ENCODE measurements at regions of chr20 and their contacts with region 1.

Region 1: GRCh38 chr20:18719445-18719844 is 94.1 kb upstream of the SCP2D1 start:
- DNase-seq: no peak
- ATAC-seq: no peak
- H3K4me3 ChIP-seq: no peak overlapping the region
- H3K27ac ChIP-seq: no peak overlapping the region
- H3K4me1 ChIP-seq: peaks cover 0 to 5% (median 0%) of the 10 kb centered on the region in 12 donors
- H3K27me3 ChIP-seq: no peaks in the 10 kb centered on the region
- CTCF ChIP-seq: no peak
- POLR2A ChIP-seq: no peak

Region 2: GRCh38 chr20:18657575-18657974 is 61.9 kb before region 1 on chr20:
- intact Hi-C with region 1: loop called in 1 of 10 experiments (anchors 10 kb)
- DNase-seq: no peak
- ATAC-seq: peak in 2 of 4 donors; percentile 33 to 63
- H3K4me3 ChIP-seq: no peak overlapping the region
- H3K27ac ChIP-seq: no peak overlapping the region
- H3K4me1 ChIP-seq: peaks cover 0 to 5% (median 0%) of the 10 kb centered on the region in 12 donors
- H3K27me3 ChIP-seq: no peaks in the 10 kb centered on the region
- CTCF ChIP-seq: no peak
- POLR2A ChIP-seq: no peak

Region 3: DNA sequence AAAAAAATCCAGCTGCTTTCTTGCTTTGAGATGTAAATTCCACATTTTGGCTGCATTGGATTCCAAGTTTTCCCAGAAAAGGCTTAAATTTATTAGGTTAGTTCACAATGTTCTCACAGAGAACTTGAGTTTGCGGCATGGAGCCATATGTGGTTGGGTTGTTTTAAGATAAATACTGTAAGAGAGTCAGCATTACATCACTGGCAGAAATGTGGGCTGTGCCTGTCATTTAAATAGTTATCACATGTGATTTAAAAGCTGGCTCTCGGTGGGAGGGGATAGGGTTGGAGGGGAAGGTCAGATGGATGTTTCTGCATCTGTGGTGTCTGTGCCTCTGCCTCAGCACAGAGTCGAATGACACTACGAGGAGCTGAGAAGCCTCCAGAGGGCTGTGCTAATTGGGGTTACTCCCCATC is 20.3 kb after region 1 on chr20:
- intact Hi-C with region 1: no loop called
- DNase-seq: no peak
- ATAC-seq: peak in 3 of 4 donors; percentile 62 to 79 (median 67)
- H3K4me3 ChIP-seq: no peak overlapping the region
- H3K27ac ChIP-seq: peak overlapping the region in 2 of 12 donors; percentile 22 to 54
- H3K4me1 ChIP-seq: peaks cover 0 to 22% (median 2%) of the 10 kb centered on the region in 12 donors
- H3K27me3 ChIP-seq: no peaks in the 10 kb centered on the region
- CTCF ChIP-seq: no peak
- POLR2A ChIP-seq: no peak

Region 4: GRCh38 chr20:18773566-18773965 is 54.1 kb after region 1 on chr20:
- intact Hi-C with region 1: no loop called
- DNase-seq: no peak
- ATAC-seq: no peak
- H3K4me3 ChIP-seq: no peak overlapping the region
- H3K27ac ChIP-seq: no peak overlapping the region
- H3K4me1 ChIP-seq: no peaks in the 10 kb centered on the region
- H3K27me3 ChIP-seq: no peaks in the 10 kb centered on the region
- CTCF ChIP-seq: no peak
- POLR2A ChIP-seq: no peak